ENCODE measurements at regions of chr1 and their contacts with region 1.

Region 1: GRCh38 chr1:179034720-179035119 is 9.0 kb downstream of the FAM20B start:
- DNase-seq: no peak
- H3K4me3 Mint-ChIP-seq: no peak overlapping the region
- H3K27ac Mint-ChIP-seq: peak overlapping the region; percentile 68
- H3K4me1 Mint-ChIP-seq: peaks cover 85% of the 10 kb centered on the region
- H3K27me3 Mint-ChIP-seq: no peaks in the 10 kb centered on the region

Region 2: DNA sequence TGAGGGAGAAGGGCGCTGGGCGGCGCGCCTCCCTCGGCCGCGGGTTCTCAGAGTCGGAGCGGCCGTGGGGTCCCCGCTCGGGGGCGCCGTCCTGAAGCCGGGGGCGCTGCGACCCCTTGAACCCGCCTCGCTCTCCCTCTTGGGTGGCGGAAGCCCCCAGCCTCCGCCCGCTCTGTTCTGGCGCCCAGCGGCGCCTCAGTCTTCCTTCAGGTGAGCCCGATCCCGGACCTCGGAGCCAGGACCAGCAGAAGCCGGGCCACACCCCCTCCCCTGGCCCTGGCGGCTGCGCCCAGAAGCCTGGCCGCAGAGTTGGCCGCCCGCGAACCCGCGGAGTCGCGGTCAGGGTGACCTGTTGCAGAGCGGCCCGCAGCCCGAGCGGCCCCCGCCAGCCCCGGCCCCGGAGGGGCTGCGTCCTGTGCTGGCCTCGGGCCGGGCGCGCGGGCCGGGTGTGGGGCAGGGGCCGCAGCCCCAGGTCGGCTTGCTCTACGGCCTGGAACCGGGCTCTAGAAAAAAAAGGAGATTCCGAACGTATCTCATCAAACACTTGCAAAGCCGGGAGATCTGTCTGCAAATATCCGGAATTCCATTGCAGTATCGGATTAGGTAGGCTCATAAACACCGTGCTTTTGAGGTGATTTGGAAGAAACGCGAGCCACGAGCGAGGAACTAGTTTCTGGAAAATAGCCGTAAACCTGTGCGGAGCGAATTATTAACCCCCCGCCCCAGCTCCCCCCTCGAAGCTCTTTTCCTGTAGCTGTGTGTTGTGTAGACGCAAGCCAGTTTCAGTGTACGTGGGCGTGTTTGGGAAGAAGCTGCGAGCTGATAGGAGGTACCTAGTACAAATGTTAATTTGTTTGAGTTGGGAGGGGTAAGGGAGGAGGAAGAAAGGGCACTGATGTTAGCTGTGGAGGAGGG is 308.9 kb before region 1 on chr1:
- CTCF ChIA-PET with region 1: no interaction called
- POLR2A ChIA-PET with region 1: no interaction called
- intact Hi-C with region 1: loop called (anchors 2 kb)
- DNase-seq: peak; percentile 67
- H3K4me3 Mint-ChIP-seq: peak overlapping the region; percentile 78
- H3K27ac Mint-ChIP-seq: no peak overlapping the region
- H3K4me1 Mint-ChIP-seq: peaks cover 18% of the 10 kb centered on the region
- H3K27me3 Mint-ChIP-seq: peaks cover 14% of the 10 kb centered on the region

Region 3: DNA sequence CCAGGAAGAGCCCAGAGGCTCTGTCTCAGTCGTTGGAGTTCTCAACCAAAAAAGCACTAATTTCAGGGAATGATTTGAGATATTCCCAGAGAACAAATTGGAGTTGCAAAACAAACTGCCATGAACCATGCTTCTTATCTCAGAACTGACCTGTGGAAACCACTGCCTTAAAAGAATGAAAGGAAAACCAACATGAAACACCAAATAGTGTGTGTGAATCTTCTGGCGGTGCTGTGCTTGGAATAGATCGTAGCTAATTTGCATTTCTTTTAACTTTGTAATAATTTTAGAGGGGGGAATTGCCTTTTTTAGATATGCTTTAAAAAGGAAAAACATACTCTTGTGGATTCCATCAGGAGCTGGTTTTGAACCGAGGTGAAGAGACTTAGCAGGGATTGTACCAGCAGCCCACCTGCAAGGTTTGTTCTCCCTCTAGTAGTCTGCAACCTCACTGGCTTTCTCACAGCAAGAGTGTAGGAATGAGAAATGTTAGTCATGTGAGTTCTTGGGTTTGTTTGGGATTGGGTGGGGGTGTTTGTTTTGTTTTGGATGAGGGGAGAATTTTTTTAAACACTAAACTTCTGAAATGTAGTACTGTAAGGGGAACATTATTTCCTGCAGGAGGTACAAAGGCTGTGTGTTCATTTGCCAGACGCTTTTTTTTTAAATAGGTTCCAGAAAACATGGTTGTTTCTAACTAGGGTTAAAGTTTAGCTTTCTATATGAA is 118.1 kb before region 1 on chr1:
- CTCF ChIA-PET with region 1: no interaction called
- POLR2A ChIA-PET with region 1: no interaction called
- intact Hi-C with region 1: no loop called
- DNase-seq: no peak
- H3K4me3 Mint-ChIP-seq: no peak overlapping the region
- H3K27ac Mint-ChIP-seq: no peak overlapping the region
- H3K4me1 Mint-ChIP-seq: no peaks in the 10 kb centered on the region
- H3K27me3 Mint-ChIP-seq: no peaks in the 10 kb centered on the region

Region 4: GRCh38 chr1:179129702-179130473 is 95.2 kb after region 1 on chr1:
- CTCF ChIA-PET with region 1: no interaction called
- POLR2A ChIA-PET with region 1: no interaction called
- intact Hi-C with region 1: loop called (anchors 1 kb)
- DNase-seq: peak; percentile 27
- H3K4me3 Mint-ChIP-seq: peak overlapping the region; percentile 59
- H3K27ac Mint-ChIP-seq: peak overlapping the region; percentile 82
- H3K4me1 Mint-ChIP-seq: peaks cover 24% of the 10 kb centered on the region
- H3K27me3 Mint-ChIP-seq: no peaks in the 10 kb centered on the region

Region 5: DNA sequence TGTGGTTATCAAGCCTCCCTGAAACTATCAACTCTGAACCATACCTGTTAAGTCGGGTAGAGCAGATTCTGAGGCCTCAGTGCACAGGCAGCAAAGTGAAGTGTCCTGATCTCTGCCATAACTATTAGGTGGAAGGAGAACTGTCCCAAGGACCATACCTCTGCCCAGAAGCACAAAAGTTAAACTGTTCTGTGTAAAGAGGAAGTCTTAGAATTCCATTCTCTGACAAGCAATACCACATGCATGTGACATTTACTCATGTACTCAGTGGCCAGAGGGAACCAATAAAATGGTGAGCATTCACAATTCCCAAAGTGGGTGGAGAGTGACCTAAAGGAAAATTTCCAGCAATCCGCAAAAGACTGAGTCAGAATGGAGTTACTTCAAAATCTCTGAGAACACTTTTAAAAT is 108.2 kb after region 1 on chr1:
- CTCF ChIA-PET with region 1: no interaction called
- POLR2A ChIA-PET with region 1: no interaction called
- intact Hi-C with region 1: loop called (anchors 5 kb)
- DNase-seq: no peak
- H3K4me3 Mint-ChIP-seq: no peak overlapping the region
- H3K27ac Mint-ChIP-seq: no peak overlapping the region
- H3K4me1 Mint-ChIP-seq: peaks cover 26% of the 10 kb centered on the region
- H3K27me3 Mint-ChIP-seq: no peaks in the 10 kb centered on the region

Region 6: GRCh38 chr1:179322557-179322956 is 287.8 kb after region 1 on chr1:
- CTCF ChIA-PET with region 1: no interaction called
- POLR2A ChIA-PET with region 1: no interaction called
- intact Hi-C with region 1: loop called (anchors 1 kb)
- DNase-seq: no peak
- H3K4me3 Mint-ChIP-seq: no peak overlapping the region
- H3K27ac Mint-ChIP-seq: no peak overlapping the region
- H3K4me1 Mint-ChIP-seq: peaks cover 33% of the 10 kb centered on the region
- H3K27me3 Mint-ChIP-seq: no peaks in the 10 kb centered on the region

Measured in activated CD4-positive, alpha-beta memory T cell treated with anti-CD3 and anti-CD28 coated beads for 36 hours (primary cell).